GM12878 (cell line): ENCODE measurements at regions of chr21 and their contacts with region 1.

Region 1: DNA sequence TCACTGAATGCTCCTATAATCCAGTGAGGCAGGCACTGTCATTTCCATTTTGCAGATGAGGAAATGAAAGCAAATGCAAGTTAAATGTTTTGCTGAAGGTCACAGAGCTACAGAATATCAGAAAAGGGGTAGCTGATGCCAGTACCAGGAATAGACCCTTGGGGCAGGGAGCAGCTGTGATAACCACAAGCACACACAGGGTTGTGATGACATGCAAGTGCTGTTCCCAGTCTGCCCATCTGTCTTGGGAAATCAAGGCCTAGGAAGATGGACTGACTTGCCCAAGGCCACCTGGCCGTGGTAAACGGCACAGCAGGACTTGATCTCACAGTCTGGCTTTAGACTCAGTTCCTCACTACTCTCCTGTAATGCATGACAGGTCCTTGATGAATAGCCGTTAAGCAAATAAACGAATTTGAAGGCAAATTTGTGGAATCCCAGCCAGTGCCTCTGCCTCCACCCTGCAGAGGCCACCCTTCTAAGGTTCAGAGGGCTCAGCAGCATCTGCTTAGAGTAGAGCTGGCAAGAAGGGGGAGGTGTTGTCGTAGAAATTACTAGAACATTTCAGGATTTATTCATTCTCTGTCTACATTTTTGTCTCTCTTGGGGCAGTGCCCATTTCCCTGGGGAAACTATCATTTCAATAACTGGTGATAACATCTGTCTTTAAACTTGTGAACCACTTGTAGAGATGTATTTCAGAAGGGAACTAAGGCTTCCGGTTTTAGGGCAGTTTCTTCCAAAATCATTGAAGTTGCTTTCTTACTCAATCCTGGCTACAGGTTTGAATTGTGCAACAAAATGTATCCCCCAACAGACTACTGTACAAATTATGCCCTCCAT is 53.2 kb upstream of the MRPS6 start:
- DNase-seq: peak; percentile 92
- ATAC-seq: peak; percentile 60
- H3K4me3 ChIP-seq: peak overlapping the region; percentile 18; the same call in 1 of the 2 replicates
- H3K27ac ChIP-seq: peak overlapping the region; percentile 93
- H3K4me1 ChIP-seq: peaks cover 58% of the 10 kb centered on the region
- H3K27me3 ChIP-seq: no peaks in the 10 kb centered on the region
- CTCF ChIP-seq: peak in 1 of 3 experiments; percentile 23; a peak in 2 of 6 replicates
- EP300 ChIP-seq: peak; percentile 58; a peak in 3 of 4 replicates
- POLR2A ChIP-seq: no peak
- RAD21 ChIP-seq: peak; percentile 29; the same call in 1 of the 2 replicates

Region 2: GRCh38 chr21:33931799-33932390 is 88.3 kb before region 1 on chr21:
- CTCF ChIA-PET with region 1: interaction called, 8 read pairs
- POLR2A ChIA-PET with region 1: no interaction called
- RAD21 ChIA-PET with region 1: interaction called, 17 read pairs
- SMC1A ChIA-PET with region 1: interaction called, 9 read pairs
- in situ Hi-C with region 1: no loop called
- intact Hi-C with region 1: no loop called
- DNase-seq: no peak
- ATAC-seq: peak; percentile 27; the same call in 2 of the 3 replicates
- H3K4me3 ChIP-seq: peak overlapping the region; percentile 57; the same call in 1 of the 2 replicates
- H3K27ac ChIP-seq: peak overlapping the region; percentile 43
- H3K4me1 ChIP-seq: no peaks in the 10 kb centered on the region
- H3K27me3 ChIP-seq: no peaks in the 10 kb centered on the region
- CTCF ChIP-seq: no peak
- EP300 ChIP-seq: no peak
- POLR2A ChIP-seq: no peak
- RAD21 ChIP-seq: no peak

Region 3: DNA sequence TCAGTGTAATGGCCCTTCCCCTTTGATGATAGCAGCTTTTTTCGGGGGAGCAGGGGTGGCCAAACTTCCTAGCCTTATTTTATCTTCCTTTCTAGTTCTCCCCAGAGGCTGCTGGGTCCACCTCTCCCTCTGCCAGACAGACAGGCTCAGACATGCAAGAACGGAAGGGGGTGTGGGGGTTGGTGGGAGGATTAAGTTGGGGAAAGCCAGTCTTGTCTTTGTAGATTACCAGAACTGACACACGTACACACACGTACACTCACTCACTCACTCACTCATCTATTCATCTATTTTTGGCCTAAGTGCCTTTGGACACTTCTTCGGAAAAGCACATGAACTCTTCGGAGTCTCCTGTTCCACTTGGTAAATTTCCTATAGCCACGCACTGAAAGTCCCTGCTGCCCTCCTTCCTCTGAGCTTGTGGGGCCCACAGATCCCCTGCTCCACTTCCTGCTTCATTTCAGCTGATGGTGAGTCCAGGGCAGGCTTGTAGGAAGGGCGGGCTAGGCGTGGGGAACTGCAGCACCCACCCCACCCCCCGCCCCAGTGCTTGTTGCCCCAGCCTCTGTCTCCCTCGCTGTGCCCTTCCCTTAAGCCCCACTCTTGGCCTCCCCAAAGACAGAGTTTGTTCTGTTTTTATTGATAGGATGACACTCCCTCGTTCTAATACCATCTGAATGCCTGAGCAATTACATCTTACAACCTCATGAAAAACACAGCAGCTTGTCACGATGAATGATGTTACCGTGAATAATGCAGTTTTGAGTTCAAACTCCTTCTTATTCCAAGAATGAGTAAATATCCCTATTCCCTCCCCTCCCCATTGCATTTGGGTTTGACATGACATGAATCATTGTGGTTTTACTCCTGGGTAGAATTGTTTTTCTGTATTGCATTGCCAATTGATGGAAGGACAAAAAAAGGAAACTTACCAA is 43.9 kb before region 1 on chr21:
- CTCF ChIA-PET with region 1: interaction called, 12 read pairs
- POLR2A ChIA-PET with region 1: interaction called, 57 read pairs
- RAD21 ChIA-PET with region 1: interaction called, 145 read pairs
- SMC1A ChIA-PET with region 1: interaction called, 193 read pairs
- in situ Hi-C with region 1: no loop called
- intact Hi-C with region 1: loop called (anchors 1 kb)
- DNase-seq: peak; percentile 90
- ATAC-seq: peak; percentile 71
- H3K4me3 ChIP-seq: peak overlapping the region; percentile 51; the same call in 1 of the 2 replicates
- H3K27ac ChIP-seq: peak overlapping the region; percentile 99
- H3K4me1 ChIP-seq: peaks cover 27% of the 10 kb centered on the region
- H3K27me3 ChIP-seq: no peaks in the 10 kb centered on the region
- CTCF ChIP-seq: no peak
- EP300 ChIP-seq: no peak; a peak in 2 of 4 replicates
- POLR2A ChIP-seq: peak; percentile 57
- RAD21 ChIP-seq: no peak

Region 4: DNA sequence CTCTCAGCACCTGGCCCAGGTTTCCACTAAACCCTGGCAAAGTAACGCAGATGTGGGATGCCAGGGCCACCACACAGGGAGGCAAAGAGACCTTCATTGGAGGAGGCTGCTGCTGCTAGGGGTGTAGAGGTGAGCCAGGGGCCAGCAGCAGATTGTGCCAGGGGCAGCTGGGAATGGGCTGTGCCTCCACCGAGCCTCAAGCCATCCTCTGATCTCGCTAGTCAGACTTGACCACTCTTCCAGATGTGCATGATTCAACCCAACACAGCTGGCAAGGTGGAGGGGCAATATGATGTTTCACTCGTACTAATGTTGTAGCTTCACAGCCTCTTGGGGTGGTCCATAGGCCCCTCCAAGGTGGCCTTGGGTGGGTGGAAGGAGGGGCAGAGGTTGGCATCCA is 19.9 kb before region 1 on chr21:
- CTCF ChIA-PET with region 1: interaction called, 3 read pairs
- POLR2A ChIA-PET with region 1: interaction called, 3 read pairs
- RAD21 ChIA-PET with region 1: interaction called, 3 read pairs
- SMC1A ChIA-PET with region 1: interaction called, 10 read pairs
- in situ Hi-C with region 1: no loop called
- intact Hi-C with region 1: no loop called
- DNase-seq: no peak
- ATAC-seq: no peak
- H3K4me3 ChIP-seq: no peak overlapping the region
- H3K27ac ChIP-seq: no peak overlapping the region
- H3K4me1 ChIP-seq: no peaks in the 10 kb centered on the region
- H3K27me3 ChIP-seq: no peaks in the 10 kb centered on the region
- CTCF ChIP-seq: no peak
- EP300 ChIP-seq: no peak
- POLR2A ChIP-seq: no peak
- RAD21 ChIP-seq: no peak

Region 5: DNA sequence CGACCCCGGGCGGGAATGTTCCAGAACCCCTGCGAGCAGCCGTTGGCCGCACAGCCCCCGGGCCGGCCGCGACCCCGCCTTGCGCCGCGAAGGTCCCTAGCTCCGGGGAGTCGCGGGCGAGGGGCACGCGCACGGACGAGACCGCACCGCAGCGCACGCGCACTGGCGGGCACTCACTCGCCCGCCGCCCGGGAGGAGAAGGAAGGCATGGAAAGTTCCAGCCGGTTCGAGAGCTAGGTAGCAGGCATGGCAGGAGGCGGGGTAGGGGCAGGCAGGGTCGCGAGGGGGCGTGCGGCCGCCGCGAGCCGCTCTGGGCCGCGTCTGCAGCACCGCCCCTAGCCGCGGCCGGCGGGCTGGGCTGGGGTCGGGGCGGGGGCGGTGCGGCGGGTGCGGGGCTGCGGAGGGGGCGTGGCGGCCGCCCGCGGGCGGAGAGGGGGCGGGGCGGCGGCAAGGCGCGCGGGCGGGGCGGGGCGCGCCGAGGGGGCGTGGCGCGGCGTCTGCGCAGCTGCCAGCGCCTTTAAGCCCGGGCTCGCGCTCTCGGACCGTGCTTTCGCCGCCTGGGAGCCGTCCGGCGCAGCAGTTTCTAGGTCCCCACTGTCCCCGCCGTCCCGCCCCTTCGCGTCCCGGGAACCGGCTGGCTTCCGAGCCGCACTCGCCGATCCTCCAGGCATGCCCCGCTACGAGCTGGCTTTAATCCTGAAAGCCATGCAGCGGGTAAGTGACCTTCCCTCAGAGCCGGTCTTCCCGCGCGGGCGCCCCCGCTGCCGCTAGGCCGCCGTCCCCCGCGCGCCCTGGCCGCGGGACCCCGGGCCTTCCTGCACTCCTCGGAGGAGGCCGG is 53.0 kb after region 1 on chr21 and contains the starts of genes MRPS6 and SLC5A3:
- CTCF ChIA-PET with region 1: interaction called, 27 read pairs
- POLR2A ChIA-PET with region 1: interaction called, 15 read pairs
- RAD21 ChIA-PET with region 1: interaction called, 51 read pairs
- SMC1A ChIA-PET with region 1: interaction called, 118 read pairs
- in situ Hi-C with region 1: no loop called
- intact Hi-C with region 1: loop called (anchors 2 kb)
- DNase-seq: no peak
- ATAC-seq: peak; percentile 75
- H3K4me3 ChIP-seq: peak within 1 kb of the TSS; percentile 91
- H3K27ac ChIP-seq: peak within 1 kb of the TSS; percentile 72
- H3K4me1 ChIP-seq: peaks cover 11% of the 10 kb centered on the region
- H3K27me3 ChIP-seq: no peaks in the 10 kb centered on the region
- CTCF ChIP-seq: no peak; a peak in 1 of 6 replicates
- EP300 ChIP-seq: no peak; a peak in 1 of 4 replicates
- POLR2A ChIP-seq: peak; percentile 98
- RAD21 ChIP-seq: no peak
- polyA plus RNA-seq, gene MRPS6: 55.6 to 95.2 TPM
- polyA plus RNA-seq, gene SLC5A3: 3.3 to 4.7 TPM

Region 6: GRCh38 chr21:34166468-34166867 is 146.2 kb after region 1 on chr21:
- CTCF ChIA-PET with region 1: no interaction called
- POLR2A ChIA-PET with region 1: no interaction called
- RAD21 ChIA-PET with region 1: no interaction called
- SMC1A ChIA-PET with region 1: no interaction called
- in situ Hi-C with region 1: no loop called
- intact Hi-C with region 1: no loop called
- DNase-seq: no peak
- ATAC-seq: no peak
- H3K4me3 ChIP-seq: no peak overlapping the region
- H3K27ac ChIP-seq: no peak overlapping the region
- H3K4me1 ChIP-seq: no peaks in the 10 kb centered on the region
- H3K27me3 ChIP-seq: no peaks in the 10 kb centered on the region
- CTCF ChIP-seq: no peak
- EP300 ChIP-seq: no peak
- POLR2A ChIP-seq: no peak
- RAD21 ChIP-seq: no peak

Region 7: DNA sequence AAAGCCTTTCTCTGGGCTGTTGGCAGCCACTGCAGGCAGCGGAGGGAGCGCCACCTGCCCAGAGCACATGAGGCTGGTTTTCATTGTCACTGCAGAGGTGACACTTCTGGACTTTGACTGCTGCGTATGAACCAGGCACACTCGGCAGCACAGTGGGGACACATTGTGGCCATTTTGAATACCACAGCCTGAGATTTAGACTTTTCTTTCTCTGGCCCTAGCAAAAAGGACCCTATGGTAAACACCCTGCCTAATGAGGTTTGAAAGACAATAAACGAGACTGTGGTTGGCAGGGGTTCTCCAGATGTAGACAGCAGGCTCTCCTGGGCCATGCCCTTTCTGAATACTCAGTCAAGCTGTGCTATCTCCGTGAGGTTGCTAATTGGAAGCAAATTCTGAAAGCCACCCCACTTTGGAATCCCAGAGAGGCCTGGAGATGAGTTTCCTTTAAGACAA is 331.6 kb after region 1 on chr21:
- CTCF ChIA-PET with region 1: interaction called, 17 read pairs
- POLR2A ChIA-PET with region 1: no interaction called
- RAD21 ChIA-PET with region 1: interaction called, 10 read pairs
- SMC1A ChIA-PET with region 1: interaction called, 13 read pairs
- in situ Hi-C with region 1: no loop called
- intact Hi-C with region 1: no loop called
- DNase-seq: peak; percentile 28
- ATAC-seq: peak; percentile 96
- H3K4me3 ChIP-seq: no peak overlapping the region
- H3K27ac ChIP-seq: no peak overlapping the region
- H3K4me1 ChIP-seq: no peaks in the 10 kb centered on the region
- H3K27me3 ChIP-seq: no peaks in the 10 kb centered on the region; a peak in 1 of 4 replicates
- CTCF ChIP-seq: peak; percentile 64 to 88 (median 69)
- EP300 ChIP-seq: no peak
- POLR2A ChIP-seq: no peak
- RAD21 ChIP-seq: peak; percentile 83